ENCODE measurements at regions of chr9 and their contacts with region 1.

Region 1: DNA sequence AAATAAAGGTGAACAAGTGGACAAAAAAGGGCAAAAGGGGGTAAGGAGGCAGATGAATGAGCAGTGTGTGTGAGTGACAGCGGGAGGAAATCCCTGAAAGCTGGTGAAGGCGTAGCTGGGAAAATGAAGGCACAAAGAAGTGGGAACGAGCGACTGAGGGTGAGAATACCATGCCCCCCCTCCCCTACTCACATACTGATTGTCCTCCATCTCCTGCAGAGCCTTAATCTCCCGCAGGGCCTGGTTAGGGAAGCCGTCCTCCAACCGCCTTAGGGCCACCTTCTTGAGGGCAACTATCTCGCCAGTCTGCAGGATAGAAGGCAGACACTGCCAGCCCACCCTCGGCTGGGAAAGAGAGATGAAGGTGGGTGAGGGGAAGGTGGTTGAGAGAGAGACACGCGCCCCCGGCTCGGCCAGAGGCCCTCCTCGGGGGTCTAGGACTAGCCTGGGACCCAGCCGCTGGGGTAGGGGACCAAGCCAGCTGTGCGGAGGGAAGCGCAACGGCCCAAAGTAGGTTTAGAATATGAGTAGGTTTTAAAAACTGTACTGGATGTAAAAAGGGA is 522 bp downstream of the CDK20 start:
- DNase-seq: peak in 1 of 9 donors; percentile 17
- ATAC-seq: no peak
- H3K4me3 ChIP-seq: peak overlapping the region; percentile 96
- H3K4me3 Mint-ChIP-seq: peak overlapping the region; percentile 87 to 99 (median 95)
- H3K27ac ChIP-seq: peak overlapping the region; percentile 77
- H3K27ac Mint-ChIP-seq: peak overlapping the region; percentile 95 to 99 (median 97)
- H3K4me1 ChIP-seq: peaks cover 0 to 10% of the 10 kb centered on the region in 2 donors
- H3K4me1 Mint-ChIP-seq: peaks cover 13 to 36% (median 32%) of the 10 kb centered on the region in 7 donors
- H3K27me3 ChIP-seq: no peaks in the 10 kb centered on the region
- H3K27me3 Mint-ChIP-seq: peaks cover 0 to 3% (median 0%) of the 10 kb centered on the region in 5 donors

Region 2: DNA sequence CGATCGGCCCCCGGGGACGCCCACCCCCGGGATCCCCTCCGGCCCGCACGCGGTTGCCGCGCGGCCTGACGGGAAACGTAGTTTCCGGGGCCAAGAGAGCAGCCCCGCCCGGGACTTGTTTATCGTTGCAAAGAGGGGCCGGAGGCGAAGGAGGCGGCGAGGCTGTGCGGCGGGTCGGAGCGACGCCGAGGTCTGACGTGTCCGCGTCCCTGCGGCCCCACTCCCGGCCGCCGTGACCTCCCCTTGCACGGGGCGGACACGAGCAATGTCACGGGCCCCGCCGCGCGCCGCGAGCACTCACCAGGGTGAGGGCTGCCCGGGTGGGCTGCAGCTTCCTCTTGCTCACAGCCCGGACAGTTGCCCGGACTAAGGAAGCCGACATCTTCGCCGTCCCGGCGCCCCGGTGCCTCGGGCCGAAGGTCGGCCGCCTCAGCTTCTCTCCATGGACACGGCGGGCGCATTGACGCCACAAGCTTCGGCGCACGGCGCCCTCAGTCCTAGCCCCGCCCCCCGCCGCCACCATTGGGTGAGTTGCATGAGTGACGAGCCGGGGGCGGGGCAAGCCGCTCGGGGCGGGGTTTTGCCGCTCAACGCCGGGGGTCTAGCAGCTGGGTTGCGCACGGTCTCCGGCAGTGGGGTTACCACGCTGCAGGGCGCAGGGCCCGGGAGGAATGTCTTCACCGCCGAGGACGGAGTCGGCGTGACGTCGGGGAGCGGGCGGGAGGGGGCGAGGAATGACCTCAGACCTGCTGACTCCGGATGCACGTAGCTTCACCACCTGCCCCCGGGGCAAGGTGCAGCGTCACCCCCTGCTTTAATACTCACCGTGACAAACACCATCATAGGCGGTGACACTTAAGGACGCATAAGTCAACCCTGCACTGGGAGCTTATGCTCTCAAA is 1691.5 kb before region 1 on chr9 and contains the start of gene ISCA1:
- CTCF ChIA-PET with region 1: no interaction called
- POLR2A ChIA-PET with region 1: no interaction called
- intact Hi-C with region 1: loop called (anchors 1 to 10 kb)
- DNase-seq: peak; percentile 97 to 99 (median 97)
- ATAC-seq: peak; percentile 92
- H3K4me3 ChIP-seq: peak within 1 kb of the TSS; percentile 89
- H3K4me3 Mint-ChIP-seq: peak within 1 kb of the TSS; percentile 85 to 98 (median 94)
- H3K27ac ChIP-seq: peak within 1 kb of the TSS; percentile 99
- H3K27ac Mint-ChIP-seq: peak within 1 kb of the TSS; percentile 90 to 98 (median 96)
- H3K4me1 ChIP-seq: peaks cover 14 to 17% of the 10 kb centered on the region in 2 donors
- H3K4me1 Mint-ChIP-seq: peaks cover 30 to 53% (median 48%) of the 10 kb centered on the region in 7 donors
- H3K27me3 ChIP-seq: no peaks in the 10 kb centered on the region
- H3K27me3 Mint-ChIP-seq: no peaks in the 10 kb centered on the region
- total RNA-seq, gene ISCA1: 26.3 to 62.3 (median 38.4) TPM

Region 3: GRCh38 chr9:86948074-86948929 is 1025.5 kb before region 1 on chr9:
- CTCF ChIA-PET with region 1: no interaction called
- POLR2A ChIA-PET with region 1: no interaction called
- intact Hi-C with region 1: loop called in 1 of 2 experiments (anchors 5 kb)
- DNase-seq: peak; percentile 50 to 70 (median 66)
- ATAC-seq: peak; percentile 80
- H3K4me3 ChIP-seq: peak overlapping the region; percentile 47
- H3K4me3 Mint-ChIP-seq: peak overlapping the region; percentile 80 to 95 (median 90)
- H3K27ac ChIP-seq: no peak overlapping the region
- H3K27ac Mint-ChIP-seq: peak overlapping the region in 5 of 9 donors; percentile 13 to 75 (median 52)
- H3K4me1 ChIP-seq: peaks cover 5 to 13% of the 10 kb centered on the region in 2 donors
- H3K4me1 Mint-ChIP-seq: peaks cover 7 to 26% (median 15%) of the 10 kb centered on the region in 7 donors
- H3K27me3 ChIP-seq: peaks cover 6 to 16% of the 10 kb centered on the region in 2 donors
- H3K27me3 Mint-ChIP-seq: peaks cover 12 to 35% (median 19%) of the 10 kb centered on the region in 5 donors

Region 4: GRCh38 chr9:87725900-87726709 is 247.7 kb before region 1 on chr9 and contains the start of gene CTSL:
- CTCF ChIA-PET with region 1: no interaction called
- POLR2A ChIA-PET with region 1: interaction called, 6 read pairs
- intact Hi-C with region 1: loop called in 1 of 2 experiments (anchors 2 kb)
- DNase-seq: peak; percentile 30 to 65 (median 46)
- ATAC-seq: peak; percentile 82
- H3K4me3 ChIP-seq: peak within 1 kb of the TSS; percentile 77
- H3K4me3 Mint-ChIP-seq: peak within 1 kb of the TSS; percentile 85 to 97 (median 93)
- H3K27ac ChIP-seq: peak within 1 kb of the TSS; percentile 56
- H3K27ac Mint-ChIP-seq: peak within 1 kb of the TSS; percentile 63 to 98 (median 91)
- H3K4me1 ChIP-seq: no peaks in the 10 kb centered on the region
- H3K4me1 Mint-ChIP-seq: peaks cover 10 to 55% (median 31%) of the 10 kb centered on the region in 7 donors
- H3K27me3 ChIP-seq: no peaks in the 10 kb centered on the region
- H3K27me3 Mint-ChIP-seq: peaks cover 0 to 43% (median 0%) of the 10 kb centered on the region in 5 donors
- total RNA-seq, gene CTSL: 3.7 to 67.9 (median 14.9) TPM

Region 5: GRCh38 chr9:88173378-88173999 is 199.7 kb after region 1 on chr9:
- CTCF ChIA-PET with region 1: no interaction called
- POLR2A ChIA-PET with region 1: no interaction called
- intact Hi-C with region 1: loop called in 1 of 2 experiments (anchors 1 kb)
- DNase-seq: peak in 8 of 9 donors; percentile 28 to 64 (median 52)
- ATAC-seq: peak; percentile 72
- H3K4me3 ChIP-seq: no peak overlapping the region
- H3K4me3 Mint-ChIP-seq: no peak overlapping the region
- H3K27ac ChIP-seq: no peak overlapping the region
- H3K27ac Mint-ChIP-seq: no peak overlapping the region
- H3K4me1 ChIP-seq: no peaks in the 10 kb centered on the region
- H3K4me1 Mint-ChIP-seq: peaks cover 0 to 9% (median 2%) of the 10 kb centered on the region in 7 donors
- H3K27me3 ChIP-seq: no peaks in the 10 kb centered on the region
- H3K27me3 Mint-ChIP-seq: peaks cover 0 to 42% (median 7%) of the 10 kb centered on the region in 5 donors

Region 6: GRCh38 chr9:88388172-88388885 is 414.5 kb after region 1 on chr9 and contains the start of gene SPIN1:
- CTCF ChIA-PET with region 1: no interaction called
- POLR2A ChIA-PET with region 1: interaction called, 4 read pairs
- intact Hi-C with region 1: loop called (anchors 1 kb)
- DNase-seq: peak; percentile 66 to 94 (median 87)
- ATAC-seq: peak; percentile 87
- H3K4me3 ChIP-seq: peak within 1 kb of the TSS; percentile 97
- H3K4me3 Mint-ChIP-seq: peak within 1 kb of the TSS; percentile 91 to 98 (median 95)
- H3K27ac ChIP-seq: peak within 1 kb of the TSS; percentile 67
- H3K27ac Mint-ChIP-seq: peak within 1 kb of the TSS; percentile 90 to 97 (median 95)
- H3K4me1 ChIP-seq: peaks cover 8 to 11% of the 10 kb centered on the region in 2 donors
- H3K4me1 Mint-ChIP-seq: peaks cover 23 to 49% (median 43%) of the 10 kb centered on the region in 7 donors
- H3K27me3 ChIP-seq: no peaks in the 10 kb centered on the region
- H3K27me3 Mint-ChIP-seq: no peaks in the 10 kb centered on the region
- total RNA-seq, gene SPIN1: 27.5 to 38.4 (median 34.9) TPM

Region 7: GRCh38 chr9:88578121-88579054 is 604.6 kb after region 1 on chr9:
- CTCF ChIA-PET with region 1: no interaction called
- POLR2A ChIA-PET with region 1: no interaction called
- intact Hi-C with region 1: loop called in 1 of 2 experiments (anchors 1 kb)
- DNase-seq: peak in 7 of 9 donors; percentile 36 to 78 (median 48)
- ATAC-seq: peak; percentile 80
- H3K4me3 ChIP-seq: no peak overlapping the region
- H3K4me3 Mint-ChIP-seq: peak overlapping the region in 5 of 10 donors; percentile 38 to 63 (median 59)
- H3K27ac ChIP-seq: no peak overlapping the region
- H3K27ac Mint-ChIP-seq: peak overlapping the region in 1 of 9 donors; percentile 34
- H3K4me1 ChIP-seq: no peaks in the 10 kb centered on the region
- H3K4me1 Mint-ChIP-seq: peaks cover 0 to 6% (median 3%) of the 10 kb centered on the region in 7 donors
- H3K27me3 ChIP-seq: no peaks in the 10 kb centered on the region
- H3K27me3 Mint-ChIP-seq: peaks cover 7 to 25% (median 16%) of the 10 kb centered on the region in 5 donors

Measured in naive thymus-derived CD4-positive, alpha-beta T cell (primary cell).